H1 (cell line): ENCODE measurements at regions of chr2 and their contacts with region 1.

Region 1: GRCh38 chr2:230987137-230988020 is 8.5 kb upstream of the SPATA3 start:
- DNase-seq: peak; percentile 38 to 98
- H3K4me3 ChIP-seq: peak overlapping the region in 3 of 4 experiments; percentile 30 to 52 (median 30); a peak in 6 of 8 replicates
- H3K27ac ChIP-seq: no peak overlapping the region
- H3K4me1 ChIP-seq: peaks cover 0 to 11% (median 5%) of the 10 kb centered on the region in 4 experiments; a peak in 5 of 7 replicates
- H3K27me3 ChIP-seq: peaks cover 0 to 4% (median 2%) of the 10 kb centered on the region in 4 experiments; a peak in 2 of 7 replicates
- CTCF ChIP-seq: peak; percentile 93 to 97 (median 95)
- EP300 ChIP-seq: no peak
- POLR2A ChIP-seq: no peak
- RAD21 ChIP-seq: peak; percentile 92 to 94

Region 2: GRCh38 chr2:230824406-230824978 is 162.9 kb before region 1 on chr2:
- CTCF ChIA-PET with region 1: interaction called, 26 read pairs
- POLR2A ChIA-PET with region 1: interaction called, 3 read pairs
- DNase-seq: peak; percentile 60 to 66
- H3K4me3 ChIP-seq: no peak overlapping the region
- H3K27ac ChIP-seq: no peak overlapping the region
- H3K4me1 ChIP-seq: peaks cover 0 to 6% (median 2%) of the 10 kb centered on the region in 4 experiments; a peak in 4 of 7 replicates
- H3K27me3 ChIP-seq: no peaks in the 10 kb centered on the region; a peak in 2 of 7 replicates
- CTCF ChIP-seq: peak; percentile 8 to 90 (median 72)
- EP300 ChIP-seq: no peak
- POLR2A ChIP-seq: no peak
- RAD21 ChIP-seq: peak; percentile 92

Region 3: GRCh38 chr2:230902180-230902899 is 85.0 kb before region 1 on chr2:
- CTCF ChIA-PET with region 1: interaction called, 136 read pairs
- POLR2A ChIA-PET with region 1: interaction called, 13 read pairs
- DNase-seq: peak; percentile 51 to 78
- H3K4me3 ChIP-seq: peak overlapping the region in 2 of 4 experiments; percentile 42 to 46; a peak in 3 of 8 replicates
- H3K27ac ChIP-seq: peak overlapping the region; percentile 75
- H3K4me1 ChIP-seq: peaks cover 7 to 32% (median 18%) of the 10 kb centered on the region in 4 experiments
- H3K27me3 ChIP-seq: peaks cover 0 to 13% (median 0%) of the 10 kb centered on the region in 4 experiments; a peak in 3 of 7 replicates
- CTCF ChIP-seq: peak; percentile 90 to 97 (median 91)
- EP300 ChIP-seq: peak in 1 of 2 experiments; percentile 67; a peak in 1 of 3 replicates
- POLR2A ChIP-seq: peak in 1 of 2 experiments; percentile 31; a peak in 1 of 3 replicates
- RAD21 ChIP-seq: peak; percentile 91 to 94

Region 4: DNA sequence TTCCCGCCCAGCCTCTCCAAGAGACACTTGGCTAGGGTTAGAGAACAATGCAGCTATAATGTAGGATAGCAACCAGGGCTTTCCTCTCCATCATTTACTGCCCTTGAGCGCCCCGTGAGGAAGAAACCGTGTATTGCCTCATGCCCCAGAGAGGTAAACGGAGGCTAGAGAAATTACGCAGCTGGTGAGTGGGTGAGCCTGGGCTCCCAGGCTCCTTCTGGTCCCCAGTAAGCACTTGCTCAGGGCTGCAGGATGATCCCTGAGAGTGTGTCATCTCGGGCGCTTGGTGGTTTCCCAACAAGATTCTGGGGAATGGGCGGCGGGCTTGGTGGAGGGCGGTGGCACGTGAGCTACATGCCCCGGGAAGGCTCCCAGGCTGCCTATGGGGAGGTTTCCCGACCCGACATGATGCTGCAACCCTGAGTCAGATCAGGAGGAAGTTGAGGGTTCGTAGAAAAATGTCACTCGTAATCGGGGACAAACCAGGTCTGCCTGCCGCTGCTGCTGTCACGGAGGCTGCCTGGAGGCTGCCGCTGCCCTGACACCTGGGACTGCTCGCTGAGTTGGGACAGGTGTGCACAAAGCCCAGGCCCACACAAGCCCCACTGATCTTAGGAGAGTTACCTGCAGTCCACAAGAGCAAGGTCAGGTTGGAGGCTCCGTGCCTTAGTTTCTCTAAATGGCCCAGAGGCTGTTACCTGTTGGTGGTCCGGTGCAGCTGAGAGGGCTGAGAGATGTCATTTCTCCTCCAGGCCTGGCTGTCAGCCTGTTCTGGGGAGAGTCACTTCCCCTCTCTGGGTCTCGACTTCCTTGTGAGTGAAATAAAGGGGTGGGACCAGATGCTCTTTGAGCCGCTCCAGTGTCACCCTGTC is 62.7 kb before region 1 on chr2 and contains the start of gene GPR55:
- CTCF ChIA-PET with region 1: interaction called, 97 read pairs
- POLR2A ChIA-PET with region 1: interaction called, 4 read pairs
- DNase-seq: peak in 1 of 2 experiments; percentile 83
- H3K4me3 ChIP-seq: no peak within 1 kb of the TSS
- H3K27ac ChIP-seq: no peak within 1 kb of the TSS
- H3K4me1 ChIP-seq: peaks cover 0 to 3% (median 2%) of the 10 kb centered on the region in 4 experiments; a peak in 2 of 7 replicates
- H3K27me3 ChIP-seq: no peaks in the 10 kb centered on the region
- CTCF ChIP-seq: peak; percentile 61 to 78 (median 73)
- EP300 ChIP-seq: no peak
- POLR2A ChIP-seq: no peak
- RAD21 ChIP-seq: peak; percentile 66 to 76
- total RNA-seq, gene GPR55: not detected in 2 replicates

Region 5: DNA sequence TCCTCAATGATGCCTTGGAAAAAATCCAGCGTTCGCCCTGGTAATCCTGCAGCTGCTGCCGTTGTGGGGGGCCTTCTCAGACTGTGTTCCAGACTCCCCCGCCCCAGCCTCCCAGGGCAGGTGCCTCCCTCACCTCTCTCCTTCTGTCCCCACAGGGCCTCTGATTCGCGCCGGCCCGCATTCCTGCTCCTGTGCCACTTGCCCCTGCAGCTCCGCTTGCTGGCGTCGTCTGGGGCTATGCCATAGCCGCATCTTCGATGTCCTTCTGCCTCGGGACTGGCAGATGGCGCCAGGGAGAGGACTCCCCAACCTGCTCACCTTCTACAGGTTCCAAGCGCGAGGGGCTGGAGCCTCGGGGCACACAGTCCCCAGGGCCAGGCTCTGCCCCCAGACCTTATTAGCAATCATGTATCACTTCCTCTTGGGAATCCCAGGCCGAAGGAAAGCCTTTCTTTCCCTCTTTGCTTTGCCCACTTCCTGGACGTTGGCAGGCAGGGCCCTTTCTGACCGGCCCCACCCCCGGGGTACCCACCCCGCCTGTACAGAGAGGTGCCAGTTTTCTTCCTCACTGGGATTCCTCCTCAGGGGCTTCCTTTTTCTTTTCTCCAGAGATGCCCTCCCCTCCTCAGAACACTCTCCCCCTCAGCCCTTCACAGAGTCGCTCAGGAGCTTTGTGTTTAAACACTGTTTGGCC is 13.0 kb after region 1 on chr2:
- CTCF ChIA-PET with region 1: interaction called, 11 read pairs
- POLR2A ChIA-PET with region 1: interaction called, 8 read pairs
- DNase-seq: peak; percentile 60 to 70
- H3K4me3 ChIP-seq: no peak overlapping the region
- H3K27ac ChIP-seq: no peak overlapping the region
- H3K4me1 ChIP-seq: no peaks in the 10 kb centered on the region; a peak in 2 of 7 replicates
- H3K27me3 ChIP-seq: peaks cover 0 to 6% (median 3%) of the 10 kb centered on the region in 4 experiments; a peak in 3 of 7 replicates
- CTCF ChIP-seq: peak; percentile 67 to 80 (median 69)
- EP300 ChIP-seq: no peak
- POLR2A ChIP-seq: no peak
- RAD21 ChIP-seq: peak; percentile 61 to 73; a peak in 3 of 4 replicates